Activated CD4-positive, alpha-beta T cell treated with anti-CD3 and anti-CD28 coated beads, Interleukin-2, amount 10 ng/mL, durations not matched to agents 7 days and 5 days (primary cell): ENCODE measurements at regions of chr3 and their contacts with region 1.

Region 1: DNA sequence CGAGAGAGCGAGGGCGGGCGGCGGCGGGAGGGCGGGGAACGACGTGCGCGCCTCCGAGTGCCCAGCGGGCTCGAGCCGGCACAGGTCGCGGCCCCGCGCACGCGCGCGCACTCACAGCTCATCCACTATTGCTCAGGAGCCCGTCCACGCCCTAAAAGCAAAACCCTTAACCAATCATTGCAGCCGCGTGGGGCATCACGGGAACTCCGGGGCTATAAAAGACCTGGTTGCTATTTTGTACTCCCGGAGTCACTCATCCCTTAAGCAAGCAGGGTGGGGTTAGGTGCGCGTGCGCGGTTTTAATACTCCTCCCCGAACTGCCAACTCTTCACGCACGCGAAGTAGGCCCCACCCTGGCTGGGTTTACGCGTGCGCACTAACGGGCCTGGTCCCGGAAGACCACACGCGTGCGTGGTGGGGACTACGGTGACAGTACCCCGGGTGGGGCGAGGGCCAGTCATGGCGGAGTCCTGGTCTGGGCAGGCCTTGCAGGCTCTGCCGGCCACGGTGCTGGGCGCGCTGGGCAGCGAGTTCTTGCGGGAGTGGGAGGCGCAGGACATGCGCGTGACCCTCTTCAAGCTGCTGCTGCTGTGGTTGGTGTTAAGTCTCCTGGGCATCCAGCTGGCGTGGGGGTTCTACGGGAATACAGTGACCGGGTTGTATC is at the starts of genes RHOA and TCTA:
- DNase-seq: peak; percentile 99
- H3K4me3 Mint-ChIP-seq: peak within 1 kb of the TSS; percentile 96
- H3K27ac Mint-ChIP-seq: peak within 1 kb of the TSS; percentile 92
- H3K4me1 Mint-ChIP-seq: peaks cover 65% of the 10 kb centered on the region
- H3K27me3 Mint-ChIP-seq: no peaks in the 10 kb centered on the region
- total RNA-seq, gene RHOA: 467 to 520 TPM
- total RNA-seq, gene TCTA: 23.3 to 24.8 TPM

Region 2: DNA sequence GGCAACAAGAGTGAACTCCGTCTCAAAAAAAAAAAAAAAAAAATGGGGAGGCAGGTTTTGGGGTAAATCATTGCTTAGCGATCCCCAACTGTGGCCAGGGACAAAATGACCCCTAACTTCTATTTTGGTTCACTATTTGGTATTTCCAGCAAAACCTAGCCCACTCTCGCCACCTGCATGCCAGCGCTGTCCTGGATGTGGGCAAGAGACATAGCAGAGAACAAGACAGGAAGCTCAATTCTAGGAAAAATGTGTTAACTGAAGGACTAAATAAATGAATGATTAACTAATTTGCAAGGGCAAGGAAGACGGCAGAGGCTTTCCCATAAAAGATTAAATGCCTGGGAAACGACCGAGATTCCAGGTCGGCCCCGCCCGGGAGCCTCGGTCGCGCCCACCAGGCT is 16.6 kb after region 1 on chr3:
- CTCF ChIA-PET with region 1: interaction called, 13 read pairs
- POLR2A ChIA-PET with region 1: interaction called, 7 read pairs
- DNase-seq: no peak
- H3K4me3 Mint-ChIP-seq: peak overlapping the region; percentile 93
- H3K27ac Mint-ChIP-seq: peak overlapping the region; percentile 99
- H3K4me1 Mint-ChIP-seq: peaks cover 37% of the 10 kb centered on the region
- H3K27me3 Mint-ChIP-seq: no peaks in the 10 kb centered on the region

Region 3: GRCh38 chr3:49454458-49454857 is 42.4 kb after region 1 on chr3:
- CTCF ChIA-PET with region 1: interaction called, 11 read pairs
- POLR2A ChIA-PET with region 1: no interaction called
- DNase-seq: no peak
- H3K4me3 Mint-ChIP-seq: no peak overlapping the region
- H3K27ac Mint-ChIP-seq: peak overlapping the region; percentile 9
- H3K4me1 Mint-ChIP-seq: no peaks in the 10 kb centered on the region
- H3K27me3 Mint-ChIP-seq: no peaks in the 10 kb centered on the region

Region 4: DNA sequence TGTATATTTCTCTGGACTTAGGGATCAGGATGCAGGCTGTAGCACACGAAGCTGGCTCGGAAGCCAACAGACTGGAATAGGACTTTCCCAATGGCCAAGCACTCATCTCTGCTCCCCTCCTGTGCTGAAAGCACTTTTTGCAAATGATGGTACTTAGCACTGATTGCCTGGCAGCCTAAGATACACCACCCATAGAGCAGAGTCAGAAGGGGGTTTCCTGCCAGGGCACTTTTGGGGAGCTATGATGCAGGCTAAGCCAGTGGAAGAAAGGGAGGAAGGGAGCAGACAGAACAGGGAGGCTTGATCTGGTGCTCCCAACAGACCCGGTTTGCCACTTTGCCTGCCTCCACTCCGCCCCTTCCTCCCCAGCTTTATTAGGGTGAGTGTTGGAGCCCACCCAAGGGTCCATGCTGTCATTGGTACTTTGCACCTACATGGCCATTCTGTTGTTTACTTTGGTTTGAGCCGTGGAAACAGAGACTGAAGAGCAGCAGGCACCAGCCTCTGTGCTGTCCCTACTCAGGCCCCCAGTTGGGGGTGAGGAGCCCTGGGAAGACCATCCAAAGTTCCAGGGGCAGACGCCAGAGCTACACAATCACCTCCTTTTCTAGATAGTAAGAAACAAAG is 158.0 kb after region 1 on chr3:
- CTCF ChIA-PET with region 1: no interaction called
- POLR2A ChIA-PET with region 1: no interaction called
- DNase-seq: no peak
- H3K4me3 Mint-ChIP-seq: no peak overlapping the region
- H3K27ac Mint-ChIP-seq: no peak overlapping the region
- H3K4me1 Mint-ChIP-seq: no peaks in the 10 kb centered on the region
- H3K27me3 Mint-ChIP-seq: peaks cover 16% of the 10 kb centered on the region